Spleen (tissue), 13 donors: ENCODE measurements at regions of chr12 and their contacts with region 1.

Region 1: GRCh38 chr12:7460375-7461259 is 16.7 kb upstream of the CD163L1 start:
- DNase-seq: no peak
- H3K4me3 ChIP-seq: no peak overlapping the region
- H3K27ac ChIP-seq: no peak overlapping the region
- H3K4me1 ChIP-seq: no peaks in the 10 kb centered on the region
- H3K27me3 ChIP-seq: no peaks in the 10 kb centered on the region
- CTCF ChIP-seq: peak; percentile 52 to 89 (median 73)
- POLR2A ChIP-seq: no peak

Region 2: DNA sequence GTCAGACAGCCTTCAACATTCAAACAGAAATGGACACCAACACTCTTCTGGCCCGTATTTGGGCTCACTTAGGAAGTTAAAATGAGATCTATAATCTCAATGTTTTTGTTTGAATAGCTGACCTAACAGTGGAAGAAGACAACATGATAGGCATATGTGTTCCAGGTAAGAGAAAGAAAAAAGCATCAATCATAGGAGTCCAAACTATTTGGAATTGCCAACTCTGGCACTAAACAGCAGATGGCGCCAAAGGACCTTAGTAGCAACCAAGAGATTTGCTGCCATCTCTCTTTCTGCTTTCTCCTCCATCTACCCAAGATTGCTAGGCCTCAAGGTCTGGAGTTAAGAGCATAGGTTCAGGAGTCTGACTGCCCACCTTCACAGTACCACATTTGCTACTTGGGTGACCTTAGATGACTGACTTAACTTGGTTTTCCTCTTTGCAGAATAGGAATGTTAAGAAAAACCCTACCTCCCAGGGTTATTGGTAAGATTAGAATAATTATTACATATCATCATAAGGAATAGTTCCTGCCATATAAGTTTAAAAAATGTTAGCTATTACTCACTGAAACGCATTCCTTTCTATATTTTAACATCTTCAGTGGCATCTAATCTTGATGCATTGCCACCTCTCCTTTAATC is 240.9 kb before region 1 on chr12:
- intact Hi-C with region 1: loop called (anchors 5 kb)
- DNase-seq: peak; percentile 82
- H3K4me3 ChIP-seq: no peak overlapping the region
- H3K27ac ChIP-seq: no peak overlapping the region
- H3K4me1 ChIP-seq: no peaks in the 10 kb centered on the region
- H3K27me3 ChIP-seq: no peaks in the 10 kb centered on the region
- CTCF ChIP-seq: peak; percentile 64 to 88 (median 86)
- POLR2A ChIP-seq: no peak